CD4-positive, alpha-beta memory T cell (primary cell): ENCODE measurements at regions of chr18 and their contacts with region 1.

Region 1: DNA sequence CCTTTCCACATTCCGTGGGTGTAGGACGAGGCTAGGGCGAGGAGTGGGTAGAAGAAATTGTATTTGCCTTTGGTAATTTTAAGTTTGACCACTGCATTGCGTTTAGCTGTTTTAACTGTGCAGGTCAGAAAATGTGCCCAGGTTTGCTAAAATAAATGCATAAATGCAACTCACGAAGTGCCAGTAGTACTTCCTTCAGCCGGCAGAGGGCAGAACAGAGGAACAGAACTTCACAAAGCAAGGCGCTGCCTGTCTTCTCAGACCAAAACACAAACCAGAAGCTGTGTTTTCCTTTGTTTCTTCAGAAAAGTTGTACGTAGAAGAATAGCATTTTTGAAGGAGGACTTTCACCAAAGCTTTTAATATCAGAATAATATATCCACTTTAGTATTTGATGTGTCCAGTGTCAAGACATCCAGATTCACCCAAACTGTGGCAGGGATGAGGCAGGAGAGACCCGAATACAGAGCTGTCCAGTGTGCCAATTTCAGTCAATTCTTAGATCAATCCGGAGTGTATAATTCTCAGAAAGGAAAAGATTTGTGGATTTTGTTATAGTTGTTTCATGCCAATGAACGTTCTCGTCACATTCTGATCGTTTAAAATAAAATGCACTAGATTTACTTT is 348.6 kb downstream of the DLGAP1 start:
- DNase-seq: peak in 4 of 5 donors; percentile 17 to 37 (median 28)
- H3K4me3 ChIP-seq: no peak overlapping the region
- H3K4me3 Mint-ChIP-seq: no peak overlapping the region
- H3K27ac ChIP-seq: no peak overlapping the region
- H3K27ac Mint-ChIP-seq: no peak overlapping the region
- H3K4me1 ChIP-seq: no peaks in the 10 kb centered on the region
- H3K4me1 Mint-ChIP-seq: no peaks in the 10 kb centered on the region
- H3K27me3 ChIP-seq: no peaks in the 10 kb centered on the region
- H3K27me3 Mint-ChIP-seq: peaks cover 0 to 2% of the 10 kb centered on the region in 2 donors

Region 2: DNA sequence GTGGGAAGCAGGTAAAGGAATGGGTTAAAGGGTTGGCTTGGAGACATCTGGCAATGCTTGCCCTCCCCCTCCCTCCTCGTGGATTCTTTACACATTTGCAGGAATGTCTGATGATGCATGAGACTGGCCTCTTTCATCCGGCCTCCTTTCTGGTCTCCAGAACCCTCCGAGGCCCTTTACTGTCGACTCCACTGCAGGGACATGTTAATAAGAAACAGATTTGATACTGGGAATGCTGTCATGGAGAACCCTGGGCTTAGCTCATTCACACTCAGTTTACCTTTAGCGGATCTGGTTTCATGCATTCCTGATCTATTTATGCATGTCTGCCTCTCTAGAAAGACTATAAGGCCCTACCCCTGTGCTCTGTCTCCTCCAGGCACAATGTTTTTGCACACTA is 417.8 kb before region 1 on chr18:
- CTCF ChIA-PET with region 1: no interaction called
- POLR2A ChIA-PET with region 1: no interaction called
- intact Hi-C with region 1: no loop called
- DNase-seq: no peak
- H3K4me3 ChIP-seq: no peak overlapping the region
- H3K4me3 Mint-ChIP-seq: no peak overlapping the region
- H3K27ac ChIP-seq: no peak overlapping the region
- H3K27ac Mint-ChIP-seq: no peak overlapping the region
- H3K4me1 ChIP-seq: no peaks in the 10 kb centered on the region
- H3K4me1 Mint-ChIP-seq: no peaks in the 10 kb centered on the region
- H3K27me3 ChIP-seq: no peaks in the 10 kb centered on the region
- H3K27me3 Mint-ChIP-seq: peaks cover 0 to 2% of the 10 kb centered on the region in 2 donors

Region 3: GRCh38 chr18:4096486-4096885 is 10.0 kb before region 1 on chr18:
- CTCF ChIA-PET with region 1: interaction called, 13 read pairs
- POLR2A ChIA-PET with region 1: no interaction called
- intact Hi-C with region 1: no loop called
- DNase-seq: no peak
- H3K4me3 ChIP-seq: no peak overlapping the region
- H3K4me3 Mint-ChIP-seq: no peak overlapping the region
- H3K27ac ChIP-seq: no peak overlapping the region
- H3K27ac Mint-ChIP-seq: no peak overlapping the region
- H3K4me1 ChIP-seq: no peaks in the 10 kb centered on the region
- H3K4me1 Mint-ChIP-seq: peaks cover 0 to 8% (median 5%) of the 10 kb centered on the region in 4 donors
- H3K27me3 ChIP-seq: no peaks in the 10 kb centered on the region
- H3K27me3 Mint-ChIP-seq: peaks cover 2 to 3% of the 10 kb centered on the region in 2 donors

Region 4: GRCh38 chr18:4119813-4120212 is 13.3 kb after region 1 on chr18:
- CTCF ChIA-PET with region 1: interaction called, 39 read pairs
- POLR2A ChIA-PET with region 1: interaction called, 3 read pairs
- intact Hi-C with region 1: no loop called
- DNase-seq: no peak
- H3K4me3 ChIP-seq: no peak overlapping the region
- H3K4me3 Mint-ChIP-seq: no peak overlapping the region
- H3K27ac ChIP-seq: no peak overlapping the region
- H3K27ac Mint-ChIP-seq: no peak overlapping the region
- H3K4me1 ChIP-seq: no peaks in the 10 kb centered on the region
- H3K4me1 Mint-ChIP-seq: no peaks in the 10 kb centered on the region
- H3K27me3 ChIP-seq: no peaks in the 10 kb centered on the region
- H3K27me3 Mint-ChIP-seq: peaks cover 2 to 5% of the 10 kb centered on the region in 2 donors

Region 5: DNA sequence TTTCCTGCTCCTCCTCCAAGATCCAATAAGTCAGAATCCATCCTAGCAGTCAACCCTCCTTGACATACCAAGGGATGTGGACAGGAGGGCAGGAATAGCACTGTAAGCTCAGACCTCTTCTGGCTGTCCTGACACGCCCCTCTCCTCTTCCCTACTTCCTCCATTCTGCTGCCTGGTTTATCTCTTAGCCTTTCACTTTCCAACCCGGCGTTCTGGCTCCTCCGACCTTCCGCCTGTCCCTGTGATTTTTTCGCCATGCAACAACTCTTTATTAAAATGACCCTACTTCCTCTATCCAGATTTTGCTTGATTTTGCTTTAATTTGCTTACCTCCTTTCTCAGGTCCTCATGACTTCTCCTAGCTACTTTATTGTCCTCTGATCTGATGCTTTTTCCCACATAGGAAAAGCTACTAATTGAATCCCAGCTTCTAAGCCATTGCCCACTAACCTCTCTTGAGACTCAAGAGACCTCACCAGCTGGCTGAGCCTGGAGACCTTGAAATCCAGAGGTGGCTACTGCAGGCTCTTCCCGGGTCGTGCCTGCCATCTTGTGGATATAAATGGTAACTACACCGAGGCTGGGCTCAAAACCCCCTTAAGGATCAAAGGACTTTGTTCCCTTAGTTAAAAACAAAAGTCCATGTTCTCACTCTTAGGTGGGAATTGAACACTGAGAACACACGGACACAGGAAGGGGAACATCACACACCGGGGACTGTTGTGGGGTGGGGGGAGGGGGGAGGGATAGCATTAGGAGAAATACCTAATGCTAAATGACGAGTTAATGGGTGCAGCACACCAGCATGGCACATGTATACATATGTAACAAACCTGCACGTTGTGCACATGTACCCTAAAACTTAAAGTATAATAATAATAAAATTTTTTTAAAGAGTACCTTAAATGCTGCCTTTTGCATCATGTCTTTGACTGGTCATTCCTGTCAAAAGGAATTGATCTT is 951.1 kb after region 1 on chr18:
- CTCF ChIA-PET with region 1: interaction called, 56 read pairs
- POLR2A ChIA-PET with region 1: no interaction called
- intact Hi-C with region 1: no loop called
- DNase-seq: peak; percentile 15 to 47 (median 32)
- H3K4me3 ChIP-seq: no peak overlapping the region
- H3K4me3 Mint-ChIP-seq: peak overlapping the region in 1 of 8 donors; percentile 39
- H3K27ac ChIP-seq: no peak overlapping the region
- H3K27ac Mint-ChIP-seq: peak overlapping the region in 4 of 7 donors; percentile 9 to 77 (median 30)
- H3K4me1 ChIP-seq: peaks cover 11% of the 10 kb centered on the region
- H3K4me1 Mint-ChIP-seq: peaks cover 15 to 21% (median 18%) of the 10 kb centered on the region in 4 donors
- H3K27me3 ChIP-seq: no peaks in the 10 kb centered on the region
- H3K27me3 Mint-ChIP-seq: peaks cover 0 to 8% of the 10 kb centered on the region in 2 donors

Region 6: GRCh38 chr18:5439986-5440696 is 1333.6 kb after region 1 on chr18:
- CTCF ChIA-PET with region 1: no interaction called
- POLR2A ChIA-PET with region 1: no interaction called
- intact Hi-C with region 1: loop called (anchors 10 kb)
- DNase-seq: no peak
- H3K4me3 ChIP-seq: no peak overlapping the region
- H3K4me3 Mint-ChIP-seq: no peak overlapping the region
- H3K27ac ChIP-seq: no peak overlapping the region
- H3K27ac Mint-ChIP-seq: no peak overlapping the region
- H3K4me1 ChIP-seq: no peaks in the 10 kb centered on the region
- H3K4me1 Mint-ChIP-seq: no peaks in the 10 kb centered on the region
- H3K27me3 ChIP-seq: no peaks in the 10 kb centered on the region
- H3K27me3 Mint-ChIP-seq: no peaks in the 10 kb centered on the region